ENCODE measurements at regions of chr7 and their contacts with region 1.

Region 1: GRCh38 chr7:130896898-130897514 is 163.0 kb upstream of the KLF14 start:
- DNase-seq: peak; percentile 92

Region 2: GRCh38 chr7:130804220-130804619 is 92.8 kb before region 1 on chr7:
- intact Hi-C with region 1: no loop called
- DNase-seq: no peak

Region 3: DNA sequence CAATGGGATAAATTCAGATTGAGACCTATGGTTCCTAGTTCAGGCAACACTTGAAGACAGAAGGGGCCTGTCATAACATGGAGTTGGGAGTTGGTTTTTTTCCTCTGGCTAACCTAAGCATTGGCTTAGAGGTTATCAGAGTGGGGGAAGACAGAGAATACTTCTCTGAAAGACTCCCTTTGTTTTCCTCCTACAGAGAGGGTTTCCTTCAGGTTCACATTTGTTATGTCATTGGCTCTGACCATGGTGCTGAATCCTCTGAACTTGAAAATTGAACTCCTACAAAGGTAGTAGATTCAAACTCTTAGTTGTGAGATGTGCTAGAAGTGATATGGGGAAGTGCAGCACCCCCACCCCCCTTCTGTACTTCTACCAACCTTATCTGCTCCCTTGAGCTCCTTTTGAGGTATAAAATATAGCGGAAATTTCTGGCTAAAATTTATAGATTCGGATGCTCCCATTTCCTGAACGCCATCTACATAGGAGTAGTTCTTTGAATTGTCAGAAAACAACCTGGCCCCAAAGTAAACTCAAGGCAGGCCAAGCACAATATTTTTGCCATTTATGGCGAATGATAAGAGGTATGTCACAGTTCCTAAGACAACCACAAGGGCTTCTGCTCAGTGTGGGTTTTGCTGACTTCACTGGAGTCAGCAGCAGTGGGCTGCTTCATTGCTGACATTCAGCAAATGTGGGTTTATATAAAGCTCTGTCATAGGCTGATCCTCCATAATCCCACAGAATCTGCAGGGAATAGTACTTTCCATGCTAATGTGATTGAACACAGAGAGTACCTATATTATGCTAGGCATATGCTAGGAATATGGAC is 31.4 kb before region 1 on chr7:
- intact Hi-C with region 1: no loop called
- DNase-seq: no peak

Region 4: GRCh38 chr7:131007394-131008330 is 110.7 kb after region 1 on chr7:
- intact Hi-C with region 1: loop called (anchors 5 to 10 kb)
- DNase-seq: peak; percentile 86

Region 5: GRCh38 chr7:131040467-131040932 is 143.5 kb after region 1 on chr7:
- intact Hi-C with region 1: loop called (anchors 5 to 10 kb)
- DNase-seq: no peak

Region 6: GRCh38 chr7:131045526-131045925 is 148.5 kb after region 1 on chr7:
- intact Hi-C with region 1: loop called (anchors 5 to 10 kb)
- DNase-seq: no peak

Measured in posterior vena cava (tissue), 2 donors.